ENCODE measurements at regions of chr7 and their contacts with region 1.

Region 1: DNA sequence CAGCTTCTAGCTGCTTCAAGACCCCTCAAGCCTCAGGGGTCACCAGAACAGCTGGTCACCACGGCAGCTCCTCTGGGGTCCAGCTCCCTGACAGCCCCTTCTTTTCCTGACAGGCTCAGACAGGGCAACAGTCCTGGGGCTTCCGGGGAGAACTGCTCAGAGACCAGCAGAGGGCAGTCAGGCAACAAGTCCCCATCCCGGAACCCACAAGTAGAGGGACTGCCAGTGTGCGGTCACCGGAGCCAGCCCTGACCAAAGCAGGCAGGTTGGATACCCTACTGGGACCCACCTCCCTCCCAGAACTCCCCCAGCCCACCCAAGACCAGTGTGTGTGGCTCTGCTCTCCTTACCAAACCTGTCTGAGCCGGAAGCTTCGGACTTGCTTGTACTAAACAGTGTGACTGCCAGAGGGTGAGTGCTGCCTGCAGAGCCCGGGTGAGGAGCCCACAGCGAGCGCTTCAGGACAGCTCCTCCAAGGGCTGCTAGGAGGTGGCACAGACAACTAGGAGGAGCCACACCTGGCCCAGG is 40.3 kb downstream of the YKT6 start:
- DNase-seq: peak; percentile 66 to 79
- ATAC-seq: peak; percentile 88 to 97
- H3K4me3 ChIP-seq: no peak overlapping the region
- H3K27ac ChIP-seq: no peak overlapping the region
- H3K4me1 ChIP-seq: peaks cover 5 to 9% of the 10 kb centered on the region in 2 donors
- H3K27me3 ChIP-seq: no peaks in the 10 kb centered on the region
- CTCF ChIP-seq: peak; percentile 62 to 79 (median 75)
- POLR2A ChIP-seq: no peak

Region 2: DNA sequence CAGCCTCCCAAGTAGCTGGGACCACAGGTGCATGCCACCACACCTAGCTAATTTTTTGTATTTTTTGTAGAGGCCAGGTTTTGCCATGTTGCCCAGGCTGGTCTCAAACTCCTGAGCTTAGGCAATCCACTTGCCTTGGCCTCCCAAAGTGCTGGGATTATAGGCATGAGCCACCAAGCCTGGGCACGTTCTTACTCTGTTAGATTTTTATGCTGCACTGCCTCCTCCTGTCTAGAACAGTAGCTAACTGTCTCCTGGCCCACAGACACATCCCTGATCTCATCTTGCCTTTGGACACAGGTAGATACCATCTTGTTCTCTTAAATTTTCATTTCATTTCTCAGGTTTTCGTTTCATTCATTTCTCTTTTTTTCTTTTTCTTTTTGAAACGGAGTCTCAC is 441.5 kb before region 1 on chr7:
- in situ Hi-C with region 1: no loop called
- intact Hi-C with region 1: no loop called
- DNase-seq: no peak
- ATAC-seq: no peak
- H3K4me3 ChIP-seq: no peak overlapping the region
- H3K27ac ChIP-seq: no peak overlapping the region
- H3K4me1 ChIP-seq: no peaks in the 10 kb centered on the region
- H3K27me3 ChIP-seq: no peaks in the 10 kb centered on the region
- CTCF ChIP-seq: no peak
- POLR2A ChIP-seq: no peak

Region 3: DNA sequence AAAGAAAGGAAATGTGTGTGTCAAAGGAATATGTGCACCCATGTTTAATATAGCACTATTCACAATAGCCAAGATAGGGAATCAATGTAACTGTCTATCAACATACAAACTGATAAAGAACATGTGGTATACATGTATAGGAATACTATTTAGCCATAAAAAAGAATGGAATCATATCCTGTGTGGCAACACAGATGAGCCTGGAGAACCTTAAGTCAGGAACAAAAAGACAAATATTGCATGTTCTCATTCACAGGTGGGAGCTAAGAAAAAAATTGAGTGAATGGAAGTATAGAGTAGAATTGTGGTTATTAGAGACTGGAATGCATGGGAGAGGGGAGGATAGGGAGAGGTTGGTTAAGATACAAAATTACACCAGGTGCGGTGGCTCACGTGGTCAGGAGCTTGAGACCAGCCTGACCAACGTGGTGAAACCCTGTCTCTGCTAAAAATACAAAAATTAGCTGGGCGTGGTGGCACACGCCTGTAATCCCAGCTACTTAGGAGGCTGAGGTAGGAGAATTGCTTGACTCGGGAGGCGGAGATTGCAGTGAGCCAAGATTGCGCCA is 345.1 kb before region 1 on chr7:
- in situ Hi-C with region 1: no loop called
- intact Hi-C with region 1: no loop called
- DNase-seq: no peak
- ATAC-seq: no peak
- H3K4me3 ChIP-seq: no peak overlapping the region
- H3K27ac ChIP-seq: no peak overlapping the region
- H3K4me1 ChIP-seq: peaks cover 14 to 25% of the 10 kb centered on the region in 2 donors
- H3K27me3 ChIP-seq: no peaks in the 10 kb centered on the region
- CTCF ChIP-seq: no peak
- POLR2A ChIP-seq: no peak

Region 4: GRCh38 chr7:44257618-44258422 is 16.8 kb after region 1 on chr7:
- in situ Hi-C with region 1: no loop called
- intact Hi-C with region 1: loop called (anchors 2 kb)
- DNase-seq: peak; percentile 78 to 91
- ATAC-seq: peak; percentile 91
- H3K4me3 ChIP-seq: no peak overlapping the region
- H3K27ac ChIP-seq: peak overlapping the region; percentile 87 to 99 (median 96)
- H3K4me1 ChIP-seq: peaks cover 59 to 61% of the 10 kb centered on the region in 2 donors
- H3K27me3 ChIP-seq: no peaks in the 10 kb centered on the region
- CTCF ChIP-seq: peak in 2 of 5 experiments; percentile 25 to 42
- POLR2A ChIP-seq: peak in 1 of 2 donors; percentile 29

Region 5: GRCh38 chr7:44307301-44307900 is 66.4 kb after region 1 on chr7:
- in situ Hi-C with region 1: no loop called
- intact Hi-C with region 1: loop called (anchors 1 kb)
- DNase-seq: no peak
- ATAC-seq: peak; percentile 26 to 40
- H3K4me3 ChIP-seq: no peak overlapping the region
- H3K27ac ChIP-seq: peak overlapping the region; percentile 1 to 83 (median 41)
- H3K4me1 ChIP-seq: peaks cover 20 to 36% of the 10 kb centered on the region in 2 donors
- H3K27me3 ChIP-seq: no peaks in the 10 kb centered on the region
- CTCF ChIP-seq: no peak
- POLR2A ChIP-seq: no peak

Region 6: DNA sequence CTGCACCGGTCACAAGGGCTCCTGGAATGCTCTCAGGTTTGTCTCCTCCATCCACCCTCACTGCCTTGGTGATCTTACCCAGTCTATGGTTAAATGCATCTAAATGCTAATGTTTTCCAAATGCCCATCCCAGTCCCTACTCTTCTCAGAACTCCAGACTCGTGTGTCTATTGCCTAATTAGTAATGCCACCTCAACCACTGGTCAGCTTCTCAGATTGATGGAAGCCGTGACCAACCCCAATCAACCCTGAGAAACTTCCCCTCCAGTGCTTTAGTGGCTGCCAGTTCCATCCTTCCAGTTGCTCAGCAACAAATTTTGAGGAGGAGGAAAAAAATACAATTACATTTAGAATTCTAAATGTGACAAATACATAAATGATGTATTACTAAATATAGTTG is 230.8 kb after region 1 on chr7:
- in situ Hi-C with region 1: loop called in 3 of 4 experiments (anchors 5 to 25 kb)
- intact Hi-C with region 1: loop called (anchors 1 kb)
- DNase-seq: no peak
- ATAC-seq: no peak
- H3K4me3 ChIP-seq: no peak overlapping the region
- H3K27ac ChIP-seq: no peak overlapping the region
- H3K4me1 ChIP-seq: peaks cover 37 to 55% of the 10 kb centered on the region in 2 donors
- H3K27me3 ChIP-seq: no peaks in the 10 kb centered on the region
- CTCF ChIP-seq: no peak
- POLR2A ChIP-seq: no peak

Region 7: GRCh38 chr7:44490351-44491200 is 249.5 kb after region 1 on chr7 and contains the start of gene NUDCD3:
- in situ Hi-C with region 1: loop called in 1 of 4 experiments (anchors 25 kb)
- intact Hi-C with region 1: no loop called
- DNase-seq: peak; percentile 83
- ATAC-seq: peak; percentile 86 to 91
- H3K4me3 ChIP-seq: peak within 1 kb of the TSS; percentile 76 to 96 (median 88)
- H3K27ac ChIP-seq: peak within 1 kb of the TSS; percentile 90 to 99 (median 96)
- H3K4me1 ChIP-seq: peaks cover 39 to 40% of the 10 kb centered on the region in 2 donors
- H3K27me3 ChIP-seq: no peaks in the 10 kb centered on the region
- CTCF ChIP-seq: peak; percentile 7 to 48 (median 23)
- POLR2A ChIP-seq: peak; percentile 64 to 80
- total RNA-seq, gene NUDCD3: 76.2 to 93.4 (median 77.0) TPM

Region 8: DNA sequence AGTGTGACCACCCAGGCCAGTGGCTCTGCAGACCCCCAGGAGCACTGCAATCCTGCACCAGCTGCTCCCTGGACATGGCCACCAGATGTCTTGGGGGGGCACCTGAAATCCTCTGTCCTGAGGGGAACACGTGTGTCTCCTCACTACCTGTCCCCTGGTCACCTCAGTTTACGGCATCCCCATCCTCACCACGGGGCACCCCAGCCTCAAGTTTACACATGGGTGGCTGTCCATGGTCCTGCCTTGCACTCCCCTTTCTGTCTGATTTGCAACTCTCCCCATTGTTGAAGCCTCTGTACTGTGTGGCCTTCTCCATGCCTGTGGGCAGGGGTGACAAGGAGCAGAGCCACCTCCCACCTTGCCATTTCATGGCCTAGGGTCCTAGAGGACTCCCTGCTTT is 983.8 kb after region 1 on chr7:
- in situ Hi-C with region 1: no loop called
- intact Hi-C with region 1: no loop called
- DNase-seq: no peak
- ATAC-seq: no peak
- H3K4me3 ChIP-seq: no peak overlapping the region
- H3K27ac ChIP-seq: no peak overlapping the region
- H3K4me1 ChIP-seq: peaks cover 0 to 4% of the 10 kb centered on the region in 2 donors
- H3K27me3 ChIP-seq: peaks cover 0 to 5% (median 0%) of the 10 kb centered on the region in 3 donors
- CTCF ChIP-seq: no peak
- POLR2A ChIP-seq: no peak